A673 (cell line): ENCODE measurements at regions of chr16 and their contacts with region 1.

Region 1: DNA sequence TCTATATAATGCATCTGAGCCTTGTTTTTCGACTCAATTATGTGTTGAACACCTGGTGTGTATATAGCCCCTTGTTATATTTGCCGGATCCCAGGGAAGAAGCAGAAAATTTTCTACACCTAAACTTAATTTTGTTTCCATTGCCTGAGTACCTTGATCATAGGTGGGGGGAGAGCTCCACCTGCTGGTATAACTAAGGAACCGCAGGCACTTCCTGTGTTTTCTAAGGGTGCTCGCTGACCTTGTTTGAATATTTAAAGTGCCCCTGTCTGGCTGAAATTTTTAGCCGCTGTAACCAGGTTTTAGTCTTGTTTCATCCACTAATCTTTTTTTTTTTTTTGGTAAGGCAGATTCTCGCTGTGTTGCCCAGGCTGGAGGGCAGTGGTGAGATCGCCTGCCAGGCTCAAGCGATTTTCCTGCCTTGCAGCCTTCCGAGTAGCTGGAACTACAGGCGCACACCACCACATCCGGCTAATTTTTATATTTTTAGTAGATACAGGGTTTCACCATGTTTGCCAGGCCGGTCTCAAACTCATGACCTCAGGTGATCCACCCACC is 6.5 kb upstream of the NUBP1 start:
- DNase-seq: peak; percentile 73
- H3K4me3 ChIP-seq: no peak overlapping the region
- H3K27ac ChIP-seq: no peak overlapping the region
- H3K4me1 ChIP-seq: no peaks in the 10 kb centered on the region
- H3K27me3 ChIP-seq: no peaks in the 10 kb centered on the region
- CTCF ChIP-seq: peak; percentile 94

Region 2: GRCh38 chr16:10039220-10040096 is 697.7 kb before region 1 on chr16:
- CTCF ChIA-PET with region 1: no interaction called
- POLR2A ChIA-PET with region 1: no interaction called
- intact Hi-C with region 1: no loop called
- DNase-seq: peak; percentile 27
- H3K4me3 ChIP-seq: no peak overlapping the region
- H3K27ac ChIP-seq: no peak overlapping the region
- H3K4me1 ChIP-seq: no peaks in the 10 kb centered on the region
- H3K27me3 ChIP-seq: no peaks in the 10 kb centered on the region
- CTCF ChIP-seq: 0 out of 2 replicates have a peak, but pooled peaks have one; percentile 21

Region 3: GRCh38 chr16:10256784-10257641 is 480.1 kb before region 1 on chr16:
- CTCF ChIA-PET with region 1: interaction called, 10 read pairs
- POLR2A ChIA-PET with region 1: no interaction called
- intact Hi-C with region 1: loop called (anchors 2 kb)
- DNase-seq: peak; percentile 58
- H3K4me3 ChIP-seq: no peak overlapping the region
- H3K27ac ChIP-seq: no peak overlapping the region
- H3K4me1 ChIP-seq: peaks cover 4% of the 10 kb centered on the region
- H3K27me3 ChIP-seq: peaks cover 2% of the 10 kb centered on the region
- CTCF ChIP-seq: peak; percentile 86

Region 4: DNA sequence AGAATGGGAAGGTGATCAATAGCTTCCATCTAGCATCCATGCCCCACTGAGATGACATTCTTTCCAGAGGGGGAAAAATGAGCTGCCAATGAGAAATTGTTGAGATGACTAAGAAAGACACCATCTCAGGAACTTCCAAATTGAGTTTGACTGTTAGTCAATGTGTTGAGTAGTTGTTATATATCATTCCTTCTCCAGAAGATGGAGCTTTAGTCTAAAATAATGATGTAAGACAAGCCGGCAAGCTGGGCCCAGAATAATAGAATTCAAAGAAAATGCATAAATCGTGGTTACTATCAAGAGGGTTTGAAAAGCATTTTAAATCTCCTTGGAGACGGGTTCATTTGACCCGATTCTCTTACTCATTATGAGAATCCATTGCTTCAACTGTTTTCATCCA is 422.3 kb before region 1 on chr16:
- CTCF ChIA-PET with region 1: no interaction called
- POLR2A ChIA-PET with region 1: no interaction called
- intact Hi-C with region 1: loop called (anchors 5 kb)
- DNase-seq: peak; percentile 41
- H3K4me3 ChIP-seq: no peak overlapping the region
- H3K27ac ChIP-seq: no peak overlapping the region
- H3K4me1 ChIP-seq: no peaks in the 10 kb centered on the region
- H3K27me3 ChIP-seq: no peaks in the 10 kb centered on the region
- CTCF ChIP-seq: peak; percentile 44; the same call in 1 of the 2 replicates

Region 5: DNA sequence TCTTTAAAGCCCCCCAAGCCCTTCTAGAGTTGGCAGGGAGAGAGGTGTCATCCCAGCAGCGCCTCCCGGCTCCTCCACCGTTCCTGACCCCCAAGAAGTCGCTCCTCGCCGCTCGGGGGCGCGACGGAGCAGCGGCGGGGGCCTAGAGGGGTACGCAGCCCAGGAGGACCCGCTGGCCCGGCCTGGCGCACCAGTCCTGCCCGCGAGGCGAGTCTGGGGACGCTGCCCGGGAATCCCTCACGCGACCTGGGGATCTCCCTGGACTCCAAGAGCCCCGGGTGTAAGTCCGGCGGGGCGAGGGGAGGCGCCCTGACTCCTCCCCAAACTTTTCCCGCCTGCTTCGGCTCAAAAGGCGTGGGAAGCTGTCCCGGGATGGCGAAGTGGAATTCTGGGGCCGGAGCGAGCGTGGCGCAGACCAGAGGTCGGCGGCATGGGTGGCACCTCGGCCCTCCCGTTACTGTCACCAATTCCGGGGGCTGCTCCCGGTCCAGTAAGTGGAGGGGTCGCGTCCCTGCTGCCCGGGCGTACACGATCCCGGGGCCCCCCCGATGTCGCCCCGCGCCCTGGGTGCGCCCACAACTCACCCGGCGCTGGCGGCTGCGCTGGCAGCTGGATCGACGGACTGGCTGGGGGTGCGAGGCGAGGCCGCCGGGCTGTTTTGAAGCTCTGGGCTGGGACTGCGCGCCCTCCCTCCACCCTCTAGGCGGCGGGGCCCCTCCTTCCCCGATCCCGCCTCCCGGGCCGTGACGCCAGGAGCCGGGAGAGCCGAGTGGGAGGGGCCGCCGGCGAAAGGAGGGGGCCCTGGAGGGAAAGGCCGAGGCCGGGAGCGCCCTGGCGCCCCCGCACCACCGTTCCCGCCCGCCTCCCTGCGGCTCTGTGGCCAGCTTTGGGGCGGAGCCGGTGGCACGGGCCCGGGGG is 156.9 kb before region 1 on chr16 and contains the start of gene EMP2:
- CTCF ChIA-PET with region 1: no interaction called
- POLR2A ChIA-PET with region 1: no interaction called
- intact Hi-C with region 1: loop called (anchors 10 kb)
- DNase-seq: peak; percentile 81
- H3K4me3 ChIP-seq: peak within 1 kb of the TSS; percentile 84
- H3K27ac ChIP-seq: peak within 1 kb of the TSS; percentile 79
- H3K4me1 ChIP-seq: peaks cover 4% of the 10 kb centered on the region
- H3K27me3 ChIP-seq: no peaks in the 10 kb centered on the region
- CTCF ChIP-seq: peak; percentile 71
- total RNA-seq, gene EMP2: 12.9 and 15.9 TPM in 2 replicates

Region 6: DNA sequence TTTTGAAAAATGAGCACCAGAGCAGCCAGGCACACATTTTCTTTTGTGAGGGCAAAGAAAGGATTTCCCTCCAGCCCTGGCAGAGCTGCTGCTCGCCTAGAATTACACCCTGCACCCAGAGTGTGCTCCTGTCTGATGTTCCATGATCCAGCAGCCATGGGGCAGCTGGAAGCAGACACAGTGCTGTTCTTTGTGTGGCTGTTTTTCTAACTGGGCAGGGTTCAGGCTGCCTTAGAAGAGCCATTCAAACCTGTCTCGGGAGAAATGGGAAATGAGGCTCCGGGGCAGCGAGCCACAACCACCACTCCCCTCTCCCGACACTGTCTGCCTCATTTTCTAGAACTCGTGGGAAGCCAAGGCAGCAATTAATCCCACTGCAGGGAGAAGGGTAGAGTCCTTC is 820.7 kb after region 1 on chr16:
- CTCF ChIA-PET with region 1: no interaction called
- POLR2A ChIA-PET with region 1: interaction called, 11 read pairs
- intact Hi-C with region 1: no loop called
- DNase-seq: no peak
- H3K4me3 ChIP-seq: no peak overlapping the region
- H3K27ac ChIP-seq: no peak overlapping the region
- H3K4me1 ChIP-seq: no peaks in the 10 kb centered on the region
- H3K27me3 ChIP-seq: no peaks in the 10 kb centered on the region
- CTCF ChIP-seq: no peak